Sigmoid colon (tissue), 7 donors: ENCODE measurements at regions of chr3 and their contacts with region 1.

Region 1: DNA sequence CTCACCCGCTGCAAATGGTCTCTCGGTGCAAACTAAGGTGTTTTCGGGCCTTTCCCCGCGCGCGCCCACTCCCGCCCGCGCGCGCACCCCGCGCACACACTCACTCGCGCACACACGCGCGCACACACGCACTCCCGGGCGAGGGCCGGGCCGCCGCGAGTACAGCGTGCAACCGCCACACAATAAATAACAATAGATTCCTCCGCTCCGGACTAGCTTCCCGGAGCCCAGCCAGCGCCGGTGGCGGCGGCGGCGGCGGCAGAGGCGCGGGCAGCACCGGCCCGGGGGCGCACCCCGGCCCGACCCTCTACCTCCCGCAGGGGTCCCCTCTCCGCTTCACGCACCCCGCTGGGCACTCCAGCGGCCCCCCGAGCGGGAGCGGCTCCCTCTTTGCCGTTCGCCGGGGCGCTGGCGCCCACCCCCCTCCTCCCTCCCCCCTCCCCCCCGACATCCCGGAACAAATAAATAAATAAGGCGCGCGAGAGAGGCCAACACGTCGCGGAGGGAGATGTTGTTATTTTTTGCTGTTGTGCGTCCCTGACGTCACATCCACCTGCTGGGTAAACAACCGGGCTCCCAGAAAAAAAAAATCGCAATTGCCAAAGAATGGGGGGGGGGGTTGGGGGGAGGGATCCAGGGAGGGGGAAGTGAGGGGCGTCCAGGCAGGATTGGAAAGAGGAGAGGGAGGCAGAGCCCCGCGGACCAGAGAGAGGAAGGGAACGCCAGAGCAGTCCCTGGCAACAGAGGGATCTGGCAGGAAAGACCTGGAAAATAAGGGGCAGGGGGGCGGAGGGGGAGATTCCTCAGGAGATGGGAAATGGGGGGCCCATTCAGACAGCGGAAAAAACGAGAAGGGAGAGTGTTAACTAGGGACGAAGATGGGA is at the start of gene FOXP1:
- DNase-seq: peak; percentile 85
- H3K4me3 ChIP-seq: peak within 1 kb of the TSS; percentile 76 to 96 (median 86)
- H3K27ac ChIP-seq: peak within 1 kb of the TSS; percentile 96 to 99 (median 98)
- H3K4me1 ChIP-seq: peaks cover 0 to 46% (median 31%) of the 10 kb centered on the region in 4 donors
- H3K27me3 ChIP-seq: no peaks in the 10 kb centered on the region
- CTCF ChIP-seq: no peak
- EP300 ChIP-seq: no peak
- POLR2A ChIP-seq: peak; percentile 11 to 24
- total RNA-seq, gene FOXP1: 139 to 232 (median 169) TPM

Region 2: GRCh38 chr3:70546679-70547078 is 1037.1 kb before region 1 on chr3:
- intact Hi-C with region 1: loop called (anchors 5 kb)
- DNase-seq: no peak
- H3K4me3 ChIP-seq: no peak overlapping the region
- H3K27ac ChIP-seq: no peak overlapping the region
- H3K4me1 ChIP-seq: peaks cover 0 to 9% (median 2%) of the 10 kb centered on the region in 4 donors
- H3K27me3 ChIP-seq: no peaks in the 10 kb centered on the region
- CTCF ChIP-seq: no peak
- EP300 ChIP-seq: no peak
- POLR2A ChIP-seq: no peak

Region 3: DNA sequence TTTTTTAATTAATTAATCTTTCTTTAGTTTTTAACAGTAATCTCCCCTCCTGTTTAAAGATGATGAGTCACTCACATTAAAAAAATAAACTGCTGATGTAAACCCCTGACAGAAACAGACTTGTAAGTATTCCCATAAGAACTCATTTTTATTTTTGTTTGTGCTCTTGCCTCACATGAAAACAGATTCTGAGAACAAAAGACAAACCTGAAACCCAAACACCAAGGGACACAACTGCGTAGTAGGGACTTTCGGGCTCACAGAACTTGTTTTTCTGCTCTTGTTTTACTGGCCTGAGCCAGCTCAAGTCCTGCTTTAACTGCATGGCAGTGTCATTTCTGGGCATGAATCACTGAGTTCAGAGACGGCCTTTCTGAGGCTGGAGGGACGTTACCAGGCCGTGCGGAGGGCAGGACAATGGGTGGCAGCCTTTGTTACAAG is 601.1 kb before region 1 on chr3:
- intact Hi-C with region 1: loop called (anchors 10 kb)
- DNase-seq: peak; percentile 74
- H3K4me3 ChIP-seq: peak overlapping the region in 1 of 4 donors; percentile 2
- H3K27ac ChIP-seq: peak overlapping the region; percentile 74 to 90 (median 84)
- H3K4me1 ChIP-seq: peaks cover 0 to 84% (median 80%) of the 10 kb centered on the region in 4 donors
- H3K27me3 ChIP-seq: no peaks in the 10 kb centered on the region
- CTCF ChIP-seq: no peak
- EP300 ChIP-seq: peak in 1 of 4 donors; percentile 18
- POLR2A ChIP-seq: no peak

Region 4: DNA sequence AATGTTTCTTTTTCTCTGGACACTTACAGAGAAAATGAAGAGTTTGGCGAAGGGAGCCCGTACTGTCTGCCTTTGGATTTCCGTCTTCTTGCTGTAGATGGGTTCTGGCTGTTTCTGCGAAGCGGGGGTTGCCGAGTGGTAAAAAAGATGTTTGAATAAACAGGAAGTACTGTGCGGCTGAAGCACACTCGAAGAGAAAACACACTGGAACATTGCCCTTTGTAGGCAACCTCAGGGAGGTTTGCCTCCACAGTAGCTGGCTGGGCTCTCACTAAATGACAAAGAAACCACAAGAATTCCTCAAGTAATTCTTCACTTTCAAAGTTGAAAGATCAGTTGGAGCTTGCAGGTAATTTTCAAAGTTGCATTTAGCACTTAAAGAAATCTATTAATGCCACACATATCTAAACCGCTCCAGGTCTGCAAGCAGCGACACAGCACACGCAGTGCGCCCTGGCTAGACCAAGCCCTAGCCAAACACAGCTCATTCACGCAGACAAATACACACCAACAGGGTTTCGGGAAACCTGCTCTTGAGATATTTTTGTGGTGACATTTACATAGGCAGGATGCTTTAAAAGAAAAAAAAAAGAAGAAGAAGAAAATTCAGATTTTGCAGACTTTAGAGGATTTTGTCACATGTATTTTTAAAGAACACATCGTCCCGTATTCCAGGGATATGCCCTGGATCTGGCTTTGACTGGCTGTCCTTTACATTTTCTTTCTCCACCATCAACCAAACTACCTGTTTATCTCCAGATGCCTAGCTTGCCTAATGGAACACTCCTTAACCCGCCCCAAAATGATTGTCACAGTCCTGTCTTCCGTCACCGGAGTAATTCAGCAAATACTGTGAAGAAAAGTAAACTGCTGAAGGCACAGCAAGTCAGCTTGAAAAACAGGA is 453.1 kb before region 1 on chr3:
- intact Hi-C with region 1: loop called (anchors 2 kb)
- DNase-seq: peak; percentile 86
- H3K4me3 ChIP-seq: peak overlapping the region; percentile 33 to 61 (median 52)
- H3K27ac ChIP-seq: peak overlapping the region; percentile 84 to 93 (median 86)
- H3K4me1 ChIP-seq: peaks cover 0 to 81% (median 55%) of the 10 kb centered on the region in 4 donors
- H3K27me3 ChIP-seq: no peaks in the 10 kb centered on the region
- CTCF ChIP-seq: no peak
- EP300 ChIP-seq: no peak
- POLR2A ChIP-seq: peak; percentile 50 to 60

Region 5: GRCh38 chr3:71305231-71306206 is 278.3 kb before region 1 on chr3:
- intact Hi-C with region 1: loop called (anchors 2 kb)
- DNase-seq: no peak
- H3K4me3 ChIP-seq: peak overlapping the region; percentile 19 to 48 (median 42)
- H3K27ac ChIP-seq: peak overlapping the region; percentile 83 to 88 (median 84)
- H3K4me1 ChIP-seq: peaks cover 0 to 82% (median 48%) of the 10 kb centered on the region in 4 donors
- H3K27me3 ChIP-seq: no peaks in the 10 kb centered on the region
- CTCF ChIP-seq: no peak
- EP300 ChIP-seq: no peak
- POLR2A ChIP-seq: no peak

Region 6: GRCh38 chr3:71652781-71653413 is 69.1 kb after region 1 on chr3:
- intact Hi-C with region 1: loop called (anchors 5 kb)
- DNase-seq: peak; percentile 80
- H3K4me3 ChIP-seq: peak overlapping the region in 2 of 4 donors; percentile 23 to 29
- H3K27ac ChIP-seq: peak overlapping the region; percentile 11 to 58 (median 29)
- H3K4me1 ChIP-seq: peaks cover 0 to 23% (median 16%) of the 10 kb centered on the region in 4 donors
- H3K27me3 ChIP-seq: no peaks in the 10 kb centered on the region
- CTCF ChIP-seq: peak; percentile 25 to 43 (median 30)
- EP300 ChIP-seq: no peak
- POLR2A ChIP-seq: no peak